Activated B cell treated with CpG ODN at 0.5 μM for 24 hours (primary cell): ENCODE measurements at regions of chr14 and their contacts with region 1.

Region 1: GRCh38 chr14:53346988-53347387 is 193.9 kb upstream of the DDHD1 start:
- DNase-seq: no peak
- ATAC-seq: no peak
- H3K4me3 Mint-ChIP-seq: no peak overlapping the region
- H3K27ac Mint-ChIP-seq: no peak overlapping the region
- H3K4me1 Mint-ChIP-seq: no peaks in the 10 kb centered on the region
- H3K27me3 Mint-ChIP-seq: no peaks in the 10 kb centered on the region
- CTCF ChIP-seq: no peak

Region 2: DNA sequence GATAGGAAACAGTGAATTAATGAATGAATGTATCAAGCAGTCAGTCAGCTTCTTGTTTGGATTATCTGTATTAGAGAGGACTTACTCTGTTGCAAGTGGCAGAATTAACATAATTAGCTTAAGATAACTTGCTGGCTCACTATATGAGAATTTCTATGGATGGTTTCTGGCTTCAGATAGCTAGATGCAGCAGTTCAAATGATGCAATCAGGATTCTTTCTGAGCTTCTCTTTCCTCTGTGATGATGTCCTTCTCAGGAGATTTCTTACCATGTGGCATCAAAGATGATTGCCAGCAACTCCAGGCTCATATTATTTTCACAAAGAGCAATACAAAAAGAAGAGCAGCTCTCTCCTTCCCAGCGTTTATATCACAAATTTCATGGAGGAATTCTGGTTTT is 1664.6 kb before region 1 on chr14:
- CTCF ChIA-PET with region 1: no interaction called
- POLR2A ChIA-PET with region 1: no interaction called
- intact Hi-C with region 1: loop called (anchors 5 kb)
- DNase-seq: no peak
- ATAC-seq: no peak
- H3K4me3 Mint-ChIP-seq: no peak overlapping the region
- H3K27ac Mint-ChIP-seq: no peak overlapping the region
- H3K4me1 Mint-ChIP-seq: no peaks in the 10 kb centered on the region
- H3K27me3 Mint-ChIP-seq: peaks cover 5% of the 10 kb centered on the region
- CTCF ChIP-seq: no peak